Breast epithelium (tissue), 4 donors: ENCODE measurements at regions of chr4 and their contacts with region 1.

Region 1: GRCh38 chr4:72084587-72085011 is 52.8 kb downstream of the NPFFR2 start:
- DNase-seq: no peak
- H3K4me3 ChIP-seq: peak overlapping the region in 1 of 3 donors; percentile 6
- H3K27ac ChIP-seq: no peak overlapping the region
- H3K4me1 ChIP-seq: no peaks in the 10 kb centered on the region
- H3K27me3 ChIP-seq: no peaks in the 10 kb centered on the region
- CTCF ChIP-seq: no peak
- POLR2A ChIP-seq: no peak

Region 2: GRCh38 chr4:70099206-70099605 is 1985.4 kb before region 1 on chr4:
- intact Hi-C with region 1: loop called (anchors 10 kb)
- DNase-seq: no peak
- H3K4me3 ChIP-seq: no peak overlapping the region
- H3K27ac ChIP-seq: no peak overlapping the region
- H3K4me1 ChIP-seq: no peaks in the 10 kb centered on the region
- H3K27me3 ChIP-seq: no peaks in the 10 kb centered on the region
- CTCF ChIP-seq: no peak
- POLR2A ChIP-seq: no peak